CD4-positive, alpha-beta T cell (primary cell): ENCODE measurements at regions of chr6 and their contacts with region 1.

Region 1: DNA sequence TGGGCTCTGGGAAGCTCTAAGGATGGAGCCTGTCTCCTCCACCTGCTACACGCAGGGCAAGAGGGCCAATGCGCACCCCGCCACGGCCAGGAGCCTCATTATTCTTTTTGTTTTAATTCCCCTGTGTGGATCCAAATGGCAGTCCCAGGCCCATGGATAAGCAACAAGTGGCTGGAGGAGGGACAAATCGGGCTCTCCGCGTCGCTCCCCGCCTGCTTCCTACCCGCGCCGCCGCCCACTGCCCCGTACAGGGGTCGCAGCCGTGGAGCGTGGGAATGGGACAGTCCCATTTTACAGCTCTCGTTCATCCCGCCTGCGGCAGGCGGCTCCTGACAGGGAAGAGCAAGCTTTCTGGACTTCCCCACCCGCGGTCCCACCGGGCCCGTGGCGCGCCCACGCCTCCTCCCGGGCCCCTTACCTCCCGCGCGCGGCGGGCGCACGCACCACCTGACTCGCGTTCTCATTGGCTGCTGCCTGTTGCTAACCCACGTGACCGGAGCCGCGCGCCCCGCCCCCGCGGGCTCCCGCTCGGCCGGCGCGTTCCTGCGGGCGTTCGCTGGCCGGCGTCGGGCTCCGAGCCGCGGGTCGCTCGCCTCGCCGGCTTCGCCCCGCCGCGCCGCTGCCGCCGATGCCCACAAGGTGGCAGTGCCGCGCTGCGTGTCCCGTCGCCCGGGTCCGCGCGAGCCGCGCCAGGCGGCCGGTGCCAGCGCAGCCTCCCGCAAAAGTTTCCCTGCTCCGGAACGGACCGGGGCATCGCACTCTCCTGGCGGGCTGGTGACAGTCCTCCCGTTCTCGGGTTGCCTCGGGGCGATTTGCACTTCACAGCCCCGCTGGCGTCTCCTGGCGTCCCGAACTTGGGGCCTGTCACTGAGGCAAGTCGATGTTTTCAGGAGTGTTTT is 93.3 kb downstream of the CD83 start:
- DNase-seq: peak; percentile 75 to 96 (median 86)
- ATAC-seq: peak; percentile 86
- H3K4me3 ChIP-seq: peak overlapping the region; percentile 78
- H3K4me3 Mint-ChIP-seq: peak overlapping the region; percentile 91
- H3K27ac ChIP-seq: no peak overlapping the region
- H3K27ac Mint-ChIP-seq: peak overlapping the region; percentile 62
- H3K4me1 ChIP-seq: peaks cover 22% of the 10 kb centered on the region
- H3K4me1 Mint-ChIP-seq: peaks cover 13% of the 10 kb centered on the region
- H3K27me3 ChIP-seq: no peaks in the 10 kb centered on the region
- H3K27me3 Mint-ChIP-seq: no peaks in the 10 kb centered on the region
- CTCF ChIP-seq: peak; percentile 62

Region 2: GRCh38 chr6:14276667-14277404 is 65.9 kb after region 1 on chr6:
- CTCF ChIA-PET with region 1: interaction called, 3 read pairs
- POLR2A ChIA-PET with region 1: interaction called, 12 read pairs
- intact Hi-C with region 1: loop called (anchors 1 to 5 kb)
- DNase-seq: peak in 9 of 14 experiments; percentile 27 to 85 (median 51)
- ATAC-seq: peak; percentile 98
- H3K4me3 ChIP-seq: peak overlapping the region; percentile 15
- H3K4me3 Mint-ChIP-seq: peak overlapping the region; percentile 68
- H3K27ac ChIP-seq: peak overlapping the region; percentile 52 to 63
- H3K27ac Mint-ChIP-seq: peak overlapping the region; percentile 85
- H3K4me1 ChIP-seq: peaks cover 38% of the 10 kb centered on the region
- H3K4me1 Mint-ChIP-seq: peaks cover 70% of the 10 kb centered on the region
- H3K27me3 ChIP-seq: no peaks in the 10 kb centered on the region
- H3K27me3 Mint-ChIP-seq: no peaks in the 10 kb centered on the region
- CTCF ChIP-seq: no peak

Region 3: GRCh38 chr6:14711056-14711703 is 500.3 kb after region 1 on chr6:
- CTCF ChIA-PET with region 1: no interaction called
- POLR2A ChIA-PET with region 1: no interaction called
- intact Hi-C with region 1: loop called in 1 of 2 experiments (anchors 5 kb)
- DNase-seq: peak in 7 of 14 experiments; percentile 11 to 74 (median 52)
- ATAC-seq: peak; percentile 63
- H3K4me3 ChIP-seq: no peak overlapping the region
- H3K4me3 Mint-ChIP-seq: no peak overlapping the region
- H3K27ac ChIP-seq: no peak overlapping the region
- H3K27ac Mint-ChIP-seq: no peak overlapping the region
- H3K4me1 ChIP-seq: peaks cover 16% of the 10 kb centered on the region
- H3K4me1 Mint-ChIP-seq: peaks cover 14% of the 10 kb centered on the region
- H3K27me3 ChIP-seq: no peaks in the 10 kb centered on the region
- H3K27me3 Mint-ChIP-seq: no peaks in the 10 kb centered on the region
- CTCF ChIP-seq: no peak

Region 4: DNA sequence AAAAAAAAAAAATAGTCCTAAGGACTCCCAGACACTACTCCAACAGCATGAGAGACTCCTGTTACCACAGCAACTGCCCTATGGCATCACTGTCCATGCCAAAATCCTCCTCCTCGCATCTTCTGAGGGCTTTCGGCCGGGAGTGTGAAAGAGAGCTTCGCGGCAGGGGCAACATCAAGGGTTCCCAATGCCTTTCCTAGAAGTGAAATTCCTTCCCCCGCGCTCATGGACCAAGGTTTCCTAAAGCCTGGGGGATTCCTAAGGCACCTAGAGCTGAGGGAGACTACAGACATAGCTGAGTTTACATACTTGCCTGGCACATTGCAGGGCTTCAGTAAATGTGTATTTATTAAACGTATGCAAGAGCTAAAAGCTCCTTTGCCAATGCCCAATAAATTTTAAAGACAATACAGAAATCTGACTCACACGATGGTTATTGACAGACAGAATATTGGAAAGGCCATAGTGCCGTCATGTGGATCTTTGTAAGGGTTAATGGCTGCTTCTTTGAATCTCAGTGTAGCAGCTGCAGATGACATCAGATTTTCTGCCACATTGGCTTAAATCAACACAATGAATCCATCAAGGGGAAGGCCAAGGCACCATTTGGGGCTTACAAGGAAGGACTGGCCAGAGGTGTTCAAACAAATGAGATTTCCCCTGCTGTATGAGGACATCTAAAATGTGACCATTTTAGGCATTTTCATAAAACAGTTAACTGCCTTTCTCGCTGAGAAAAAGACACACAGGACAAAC is 753.8 kb after region 1 on chr6:
- CTCF ChIA-PET with region 1: no interaction called
- POLR2A ChIA-PET with region 1: no interaction called
- intact Hi-C with region 1: loop called in 1 of 2 experiments (anchors 5 kb)
- DNase-seq: no peak
- ATAC-seq: no peak
- H3K4me3 ChIP-seq: no peak overlapping the region
- H3K4me3 Mint-ChIP-seq: no peak overlapping the region
- H3K27ac ChIP-seq: no peak overlapping the region
- H3K27ac Mint-ChIP-seq: no peak overlapping the region
- H3K4me1 ChIP-seq: no peaks in the 10 kb centered on the region
- H3K4me1 Mint-ChIP-seq: no peaks in the 10 kb centered on the region
- H3K27me3 ChIP-seq: no peaks in the 10 kb centered on the region
- H3K27me3 Mint-ChIP-seq: no peaks in the 10 kb centered on the region
- CTCF ChIP-seq: no peak

Region 5: GRCh38 chr6:15389765-15390723 is 1179.1 kb after region 1 on chr6:
- CTCF ChIA-PET with region 1: no interaction called
- POLR2A ChIA-PET with region 1: no interaction called
- intact Hi-C with region 1: loop called (anchors 1 to 5 kb)
- DNase-seq: peak in 3 of 14 experiments; percentile 11 to 42 (median 41)
- ATAC-seq: peak; percentile 52
- H3K4me3 ChIP-seq: no peak overlapping the region
- H3K4me3 Mint-ChIP-seq: no peak overlapping the region
- H3K27ac ChIP-seq: no peak overlapping the region
- H3K27ac Mint-ChIP-seq: peak overlapping the region; percentile 32
- H3K4me1 ChIP-seq: peaks cover 43% of the 10 kb centered on the region
- H3K4me1 Mint-ChIP-seq: peaks cover 72% of the 10 kb centered on the region
- H3K27me3 ChIP-seq: no peaks in the 10 kb centered on the region
- H3K27me3 Mint-ChIP-seq: no peaks in the 10 kb centered on the region
- CTCF ChIP-seq: peak; percentile 62

Region 6: DNA sequence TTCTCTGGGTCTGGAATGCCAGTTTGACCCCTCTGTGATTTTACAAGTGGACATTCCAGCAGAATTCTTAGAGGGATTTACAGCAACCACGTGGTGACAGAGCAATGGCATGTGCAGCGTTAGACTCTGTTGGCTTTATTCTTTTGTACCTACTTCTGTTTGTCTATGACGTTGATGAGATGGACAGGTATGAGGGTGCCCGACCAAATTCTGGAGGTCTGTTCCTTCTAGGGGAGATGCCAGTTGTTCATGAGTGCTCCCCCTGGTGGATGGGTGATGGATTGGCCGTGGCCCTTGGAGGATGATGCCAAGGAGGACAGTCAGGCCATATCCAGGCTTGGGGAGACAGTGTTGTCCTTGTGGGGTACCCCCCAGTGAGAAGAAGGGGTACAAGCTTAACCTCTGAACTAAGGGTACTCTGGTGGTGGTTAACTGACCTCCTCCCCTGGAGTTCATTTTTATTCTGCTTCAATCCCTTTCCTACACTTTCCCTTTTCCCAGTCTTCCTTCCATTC is 1253.4 kb after region 1 on chr6:
- CTCF ChIA-PET with region 1: no interaction called
- POLR2A ChIA-PET with region 1: no interaction called
- intact Hi-C with region 1: loop called in 1 of 2 experiments (anchors 5 kb)
- DNase-seq: peak; percentile 32 to 76 (median 48)
- ATAC-seq: peak; percentile 73
- H3K4me3 ChIP-seq: no peak overlapping the region
- H3K4me3 Mint-ChIP-seq: no peak overlapping the region
- H3K27ac ChIP-seq: no peak overlapping the region
- H3K27ac Mint-ChIP-seq: no peak overlapping the region
- H3K4me1 ChIP-seq: no peaks in the 10 kb centered on the region
- H3K4me1 Mint-ChIP-seq: peaks cover 66% of the 10 kb centered on the region
- H3K27me3 ChIP-seq: no peaks in the 10 kb centered on the region
- H3K27me3 Mint-ChIP-seq: no peaks in the 10 kb centered on the region
- CTCF ChIP-seq: peak; percentile 76

Region 7: GRCh38 chr6:15621203-15622044 is 1410.5 kb after region 1 on chr6:
- CTCF ChIA-PET with region 1: no interaction called
- POLR2A ChIA-PET with region 1: no interaction called
- intact Hi-C with region 1: loop called (anchors 5 kb)
- DNase-seq: peak in 2 of 14 experiments; percentile 41 to 51
- ATAC-seq: no peak
- H3K4me3 ChIP-seq: no peak overlapping the region
- H3K4me3 Mint-ChIP-seq: no peak overlapping the region
- H3K27ac ChIP-seq: no peak overlapping the region
- H3K27ac Mint-ChIP-seq: no peak overlapping the region
- H3K4me1 ChIP-seq: peaks cover 4% of the 10 kb centered on the region
- H3K4me1 Mint-ChIP-seq: peaks cover 59% of the 10 kb centered on the region
- H3K27me3 ChIP-seq: no peaks in the 10 kb centered on the region
- H3K27me3 Mint-ChIP-seq: no peaks in the 10 kb centered on the region
- CTCF ChIP-seq: no peak